GM18951 (cell line): ENCODE measurements at regions of chr1 and their contacts with region 1.

Region 1: GRCh38 chr1:157369808-157370521 is 182.3 kb downstream of the FCRL5 start:
- POLR2A ChIP-seq: no peak

Region 2: DNA sequence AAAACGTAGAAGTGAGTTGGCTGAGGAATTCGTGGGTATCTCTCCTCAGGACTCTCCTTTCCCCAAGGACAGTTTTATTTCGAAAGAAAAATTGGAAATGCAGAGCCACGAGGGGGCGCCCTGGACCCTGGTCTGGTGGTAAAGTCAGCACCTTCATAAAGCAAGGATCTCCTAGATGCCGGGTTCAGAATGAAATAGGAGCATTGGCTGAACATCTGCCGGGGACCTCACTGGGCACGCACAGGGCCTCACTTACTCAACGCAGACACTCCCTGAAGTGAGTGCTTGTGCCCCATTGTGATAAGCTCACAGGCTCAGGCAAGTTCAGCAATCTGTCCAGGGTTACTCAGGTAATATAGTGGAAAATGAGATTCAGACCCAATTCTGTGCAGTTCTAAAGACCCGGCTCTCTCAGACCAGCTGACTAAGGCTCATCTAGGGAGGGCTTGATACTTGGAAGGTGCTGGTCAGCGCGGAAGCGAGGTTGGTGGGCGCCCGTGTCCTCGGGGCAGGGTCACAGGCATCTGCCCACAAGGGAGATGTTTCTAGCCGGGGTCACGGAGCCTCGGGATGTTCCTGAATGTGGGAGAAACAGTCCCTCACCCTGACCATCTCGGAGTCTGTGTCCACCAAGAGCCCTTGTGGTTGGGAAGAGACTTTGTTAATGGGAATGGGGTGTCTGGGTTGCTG is 176.1 kb before region 1 on chr1:
- in situ Hi-C with region 1: loop called (anchors 10 kb)
- POLR2A ChIP-seq: no peak

Region 3: GRCh38 chr1:157490467-157491165 is 120.7 kb after region 1 on chr1:
- in situ Hi-C with region 1: loop called (anchors 10 kb)
- POLR2A ChIP-seq: no peak